Common myeloid progenitor, CD34-positive (primary cell): ENCODE measurements at regions of chr17 and their contacts with region 1.

Region 1: GRCh38 chr17:35764123-35764991 is 3.7 kb downstream of the C17orf50 start:
- DNase-seq: peak; percentile 91 to 93 (median 92)
- H3K4me3 ChIP-seq: peak overlapping the region; percentile 41 to 86 (median 73)
- H3K27ac ChIP-seq: no peak overlapping the region
- H3K4me1 ChIP-seq: peaks cover 0 to 21% (median 17%) of the 10 kb centered on the region in 4 experiments
- H3K27me3 ChIP-seq: no peaks in the 10 kb centered on the region

Region 2: GRCh38 chr17:35715416-35715815 is 48.9 kb before region 1 on chr17:
- CTCF ChIA-PET with region 1: no interaction called
- POLR2A ChIA-PET with region 1: no interaction called
- DNase-seq: no peak
- H3K4me3 ChIP-seq: no peak overlapping the region
- H3K27ac ChIP-seq: no peak overlapping the region
- H3K4me1 ChIP-seq: peaks cover 0 to 10% (median 6%) of the 10 kb centered on the region in 4 experiments
- H3K27me3 ChIP-seq: no peaks in the 10 kb centered on the region

Region 3: DNA sequence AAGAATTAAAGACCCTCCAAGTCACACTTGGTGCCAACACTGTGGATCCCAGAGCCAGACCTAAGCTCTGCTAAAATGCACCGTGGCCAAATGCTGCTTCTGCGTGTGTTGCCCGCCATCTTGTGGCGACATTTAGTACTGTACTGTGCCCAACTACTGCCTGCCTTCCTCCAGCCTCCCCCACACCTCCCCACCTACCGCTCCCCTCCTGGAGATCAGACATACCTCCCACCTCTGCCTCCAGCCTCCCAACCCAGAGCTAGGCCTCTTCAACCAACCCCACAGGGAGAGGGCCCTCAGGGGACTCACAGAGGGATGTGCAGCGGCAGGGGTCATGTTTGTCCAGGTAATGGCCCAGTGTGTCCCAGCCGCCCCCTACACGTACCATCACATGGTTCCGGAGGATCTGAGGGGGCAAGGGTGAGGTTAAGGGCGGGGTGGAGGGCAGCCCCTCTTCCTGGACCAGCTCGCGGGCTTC is 16.8 kb before region 1 on chr17:
- CTCF ChIA-PET with region 1: interaction called, 72 read pairs
- POLR2A ChIA-PET with region 1: interaction called, 3 read pairs
- DNase-seq: peak; percentile 81 to 91 (median 86)
- H3K4me3 ChIP-seq: no peak overlapping the region
- H3K27ac ChIP-seq: no peak overlapping the region
- H3K4me1 ChIP-seq: peaks cover 0 to 40% (median 30%) of the 10 kb centered on the region in 4 experiments
- H3K27me3 ChIP-seq: peaks cover 0 to 11% (median 0%) of the 10 kb centered on the region in 5 experiments

Region 4: DNA sequence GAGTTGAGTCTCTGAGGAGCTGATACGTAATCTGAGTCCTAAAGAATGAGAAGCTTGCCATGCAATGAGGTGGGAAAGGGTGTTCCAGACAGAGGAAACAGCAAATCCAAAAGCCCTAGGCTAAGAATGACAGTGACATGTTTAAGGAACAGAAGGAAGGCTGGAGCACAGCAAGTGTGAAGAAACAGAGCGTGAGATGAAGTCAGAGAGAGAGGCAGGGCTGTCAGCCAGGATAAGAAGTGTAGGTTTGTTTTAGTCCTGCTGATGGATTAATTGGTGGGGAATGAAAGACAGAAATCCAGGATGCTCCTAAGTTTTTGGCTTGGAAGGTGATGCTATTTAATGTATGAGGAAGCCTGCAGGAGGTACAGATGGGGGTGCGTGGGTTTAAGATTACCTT is 16.6 kb after region 1 on chr17:
- CTCF ChIA-PET with region 1: interaction called, 16 read pairs
- POLR2A ChIA-PET with region 1: no interaction called
- DNase-seq: no peak
- H3K4me3 ChIP-seq: no peak overlapping the region
- H3K27ac ChIP-seq: no peak overlapping the region
- H3K4me1 ChIP-seq: peaks cover 0 to 10% (median 0%) of the 10 kb centered on the region in 4 experiments
- H3K27me3 ChIP-seq: no peaks in the 10 kb centered on the region

Region 5: GRCh38 chr17:35794988-35795824 is 30.8 kb after region 1 on chr17 and contains the start of gene MMP28:
- CTCF ChIA-PET with region 1: interaction called, 139 read pairs
- POLR2A ChIA-PET with region 1: interaction called, 5 read pairs
- DNase-seq: peak in 2 of 3 donors; percentile 51 to 68
- H3K4me3 ChIP-seq: peak within 1 kb of the TSS; percentile 61 to 89 (median 71)
- H3K27ac ChIP-seq: no peak within 1 kb of the TSS
- H3K4me1 ChIP-seq: peaks cover 0 to 38% (median 28%) of the 10 kb centered on the region in 4 experiments
- H3K27me3 ChIP-seq: no peaks in the 10 kb centered on the region

Region 6: DNA sequence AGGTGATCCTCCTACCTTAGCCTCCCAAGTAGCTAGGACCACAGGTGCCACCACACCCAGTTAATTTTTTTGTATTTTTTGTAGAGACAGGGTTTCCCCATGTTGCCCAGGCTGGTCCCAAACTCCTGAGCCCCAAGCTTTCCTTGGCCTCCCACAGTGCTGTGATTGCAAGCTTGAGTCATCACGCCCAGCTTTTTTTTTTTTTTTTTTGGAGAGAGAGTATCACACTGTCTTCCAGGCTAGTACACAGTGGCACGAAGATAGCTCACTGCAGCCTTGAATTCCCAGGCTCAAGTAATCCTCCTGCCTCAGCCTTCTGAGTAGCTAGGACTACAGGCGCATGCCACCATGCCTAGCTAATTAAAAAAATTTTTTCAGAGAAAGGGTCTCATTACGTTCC is 77.1 kb after region 1 on chr17:
- CTCF ChIA-PET with region 1: no interaction called
- POLR2A ChIA-PET with region 1: no interaction called
- DNase-seq: no peak
- H3K4me3 ChIP-seq: no peak overlapping the region
- H3K27ac ChIP-seq: no peak overlapping the region
- H3K4me1 ChIP-seq: no peaks in the 10 kb centered on the region
- H3K27me3 ChIP-seq: no peaks in the 10 kb centered on the region